PC-9 (cell line): ENCODE measurements at regions of chr21 and their contacts with region 1.

Region 1: DNA sequence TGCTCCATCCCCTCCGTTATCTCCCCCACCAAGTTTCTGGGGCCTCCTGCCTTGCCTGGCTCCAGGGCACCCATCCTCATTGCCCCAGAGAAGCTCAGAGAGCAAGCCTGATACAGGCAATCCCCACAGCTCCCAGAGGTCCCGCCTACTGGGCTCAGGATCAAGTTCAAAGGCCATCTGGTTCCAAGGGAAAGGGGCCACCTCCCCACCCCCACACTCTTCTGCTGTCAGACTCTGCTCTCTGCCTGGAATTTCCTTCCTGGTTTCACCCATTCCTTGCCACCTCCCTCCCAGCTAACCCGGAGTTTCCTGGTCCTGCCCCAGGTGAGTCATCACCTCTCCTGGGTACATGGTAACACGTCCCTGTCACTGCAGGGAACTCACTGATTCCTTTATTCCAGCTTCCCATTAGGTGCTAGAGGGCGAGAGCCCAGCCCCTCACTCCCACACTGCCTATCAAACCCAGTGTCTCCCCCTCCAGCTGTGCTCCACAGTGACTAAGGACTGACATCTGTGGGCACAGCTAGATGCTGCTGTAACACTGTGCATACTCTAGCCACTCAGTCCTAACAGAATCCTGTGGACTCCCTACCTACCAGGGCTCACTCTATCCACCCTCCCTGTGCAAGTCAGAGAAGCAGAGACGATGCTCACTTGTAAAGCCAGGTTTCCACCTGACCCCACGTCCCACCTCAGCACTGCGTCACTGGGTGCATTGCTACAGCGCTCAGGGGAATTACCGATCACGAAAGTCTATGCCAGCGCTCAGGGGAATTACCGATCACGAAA is 21.8 kb downstream of the RSPH1 start:
- DNase-seq: peak; percentile 82 to 95
- H3K4me3 ChIP-seq: no peak overlapping the region
- H3K27ac ChIP-seq: peak overlapping the region; percentile 79
- H3K4me1 ChIP-seq: peaks cover 32% of the 10 kb centered on the region
- H3K27me3 ChIP-seq: no peaks in the 10 kb centered on the region
- CTCF ChIP-seq: no peak

Region 2: DNA sequence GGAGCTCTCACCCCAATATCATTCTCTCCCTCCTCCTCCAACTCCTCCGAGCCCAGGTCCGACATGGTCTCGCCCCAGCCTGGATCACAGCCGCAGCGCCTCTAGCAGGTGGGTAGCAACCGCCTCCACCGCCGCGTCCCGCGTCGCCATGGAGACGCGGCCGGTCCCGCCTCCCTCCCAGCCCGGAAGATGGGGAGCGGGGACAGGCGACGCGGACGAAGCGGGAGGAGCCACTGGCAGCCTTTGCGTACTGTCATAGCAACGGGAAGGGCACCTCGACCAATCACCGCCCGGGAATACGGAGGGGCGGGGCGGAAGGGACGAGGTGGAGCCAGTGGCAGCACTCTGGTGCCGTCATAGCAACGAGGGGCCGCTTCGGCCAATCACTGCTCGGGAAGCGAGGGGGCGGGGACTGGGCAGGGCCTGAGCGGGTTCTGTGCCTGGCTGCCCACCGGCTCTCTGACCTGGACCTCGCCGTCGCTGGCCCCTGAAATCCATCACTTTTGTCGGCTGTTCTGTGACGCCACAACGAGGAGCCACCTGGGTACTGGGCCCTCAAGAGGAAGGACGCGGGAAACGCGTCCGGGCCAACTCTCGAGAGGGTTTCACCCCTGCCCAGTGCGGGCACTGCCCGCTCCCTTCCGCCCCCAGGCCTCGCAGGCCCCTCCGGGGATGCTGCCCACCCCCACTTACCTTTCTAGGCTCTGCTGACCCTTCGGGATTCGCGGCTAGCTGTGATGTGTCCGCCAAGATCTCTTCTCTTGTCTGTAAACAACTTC is 22.1 kb after region 1 on chr21 and contains the start of gene RSPH1:
- CTCF ChIA-PET with region 1: interaction called, 6 read pairs
- POLR2A ChIA-PET with region 1: interaction called, 4 read pairs
- intact Hi-C with region 1: loop called (anchors 2 kb)
- DNase-seq: peak; percentile 94 to 99
- H3K4me3 ChIP-seq: peak within 1 kb of the TSS; percentile 70
- H3K27ac ChIP-seq: peak within 1 kb of the TSS; percentile 35; the same call in 1 of the 2 replicates
- H3K4me1 ChIP-seq: peaks cover 28% of the 10 kb centered on the region
- H3K27me3 ChIP-seq: no peaks in the 10 kb centered on the region
- CTCF ChIP-seq: no peak
- total RNA-seq, gene RSPH1: 4.3 and 8.0 TPM in 2 replicates

Region 3: DNA sequence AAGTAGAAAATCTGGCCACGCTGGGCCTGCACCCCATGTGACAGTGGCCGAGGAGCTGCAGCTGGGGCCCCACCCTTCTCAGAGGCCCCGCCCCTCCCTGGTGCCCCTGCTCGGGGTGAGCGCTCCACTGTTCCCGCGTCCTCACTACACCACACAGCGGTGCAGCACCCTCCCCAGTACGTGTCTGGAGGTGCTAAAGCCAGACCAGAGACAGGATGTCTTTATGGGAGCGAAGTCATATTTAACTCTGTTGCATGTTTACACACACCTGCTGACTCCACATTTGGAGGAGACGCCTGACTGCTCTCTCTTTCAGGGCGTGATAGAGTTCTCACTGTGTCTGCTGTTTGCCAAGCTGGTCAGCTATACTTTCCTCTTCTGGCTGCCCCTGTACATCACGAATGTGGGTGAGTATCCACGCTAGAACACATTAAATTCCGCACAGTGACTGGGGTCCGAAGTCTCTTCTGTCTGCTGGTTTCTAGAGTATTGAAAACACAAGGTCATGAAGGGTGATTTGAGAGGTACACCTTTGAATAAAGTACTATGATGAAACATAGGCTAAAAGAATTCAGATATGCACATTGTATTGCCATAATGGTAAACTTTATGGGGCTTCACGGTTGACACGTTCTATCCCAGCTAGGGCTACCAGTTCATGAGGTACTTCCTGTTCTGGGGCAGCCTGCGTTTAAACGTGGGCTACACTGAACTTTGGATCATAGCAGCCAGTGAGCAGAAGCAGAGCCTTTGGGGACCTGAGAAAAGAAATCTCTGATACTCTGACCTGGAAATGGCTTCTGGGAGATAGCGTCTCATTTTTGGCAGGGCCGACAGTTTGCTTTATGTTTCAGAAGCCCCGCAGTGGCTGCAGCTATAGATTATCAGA is 87.8 kb after region 1 on chr21:
- CTCF ChIA-PET with region 1: no interaction called
- POLR2A ChIA-PET with region 1: no interaction called
- intact Hi-C with region 1: no loop called
- DNase-seq: no peak
- H3K4me3 ChIP-seq: no peak overlapping the region
- H3K27ac ChIP-seq: no peak overlapping the region
- H3K4me1 ChIP-seq: no peaks in the 10 kb centered on the region
- H3K27me3 ChIP-seq: no peaks in the 10 kb centered on the region
- CTCF ChIP-seq: no peak